Activated CD4-positive, alpha-beta memory T cell treated with anti-CD3 and anti-CD28 coated beads for 36 hours (primary cell): ENCODE measurements at regions of chr10 and their contacts with region 1.

Region 1: DNA sequence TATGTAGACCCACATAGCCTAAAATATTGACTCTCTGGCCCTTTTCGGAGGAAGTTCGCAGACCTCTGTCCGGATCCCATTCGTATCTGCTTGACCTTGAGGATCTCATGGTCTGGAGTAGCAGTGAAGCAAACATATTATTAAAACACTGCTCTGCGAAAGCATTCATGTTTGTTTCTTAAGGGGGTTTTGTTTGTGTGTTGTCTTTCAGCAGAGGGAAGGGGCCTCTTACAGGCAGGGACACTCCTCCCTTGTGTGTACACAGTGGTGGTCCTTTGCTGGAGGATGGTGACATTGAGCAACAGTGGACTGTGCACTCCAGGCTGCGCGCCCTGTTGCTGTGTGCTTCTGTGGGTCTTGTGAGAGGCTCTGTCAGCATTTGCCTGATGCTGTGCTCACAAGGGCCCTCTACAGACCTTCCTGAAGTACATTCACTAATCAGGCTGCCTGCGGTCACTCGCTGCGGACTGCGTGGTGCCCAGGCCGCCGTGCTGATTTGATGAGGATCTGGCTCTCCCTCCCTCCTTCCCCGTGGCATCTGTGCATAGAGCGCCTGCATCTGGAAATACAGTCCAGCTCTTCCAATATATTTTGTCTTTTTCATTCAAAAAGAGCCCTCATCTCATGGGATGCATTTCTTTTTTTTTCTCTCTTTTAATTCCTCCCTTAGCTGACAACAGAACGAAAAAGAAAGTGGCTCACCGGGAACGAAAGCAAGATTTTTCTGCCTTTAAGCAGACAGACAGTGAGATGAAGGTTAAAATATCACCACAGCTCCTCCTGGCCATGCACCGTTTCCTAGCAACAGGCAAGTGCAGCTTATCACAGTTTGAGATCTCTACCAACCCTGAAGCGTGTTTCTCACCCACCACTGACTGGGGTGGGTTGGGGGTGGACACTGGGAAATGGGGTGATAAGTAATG is 135.8 kb downstream of the CNNM2 start:
- DNase-seq: peak; percentile 66
- H3K4me3 Mint-ChIP-seq: peak overlapping the region; percentile 75
- H3K27ac Mint-ChIP-seq: peak overlapping the region; percentile 84
- H3K4me1 Mint-ChIP-seq: peaks cover 17% of the 10 kb centered on the region
- H3K27me3 Mint-ChIP-seq: no peaks in the 10 kb centered on the region

Region 2: GRCh38 chr10:102935505-102935904 is 118.4 kb before region 1 on chr10:
- CTCF ChIA-PET with region 1: no interaction called
- POLR2A ChIA-PET with region 1: no interaction called
- intact Hi-C with region 1: loop called (anchors 1 kb)
- DNase-seq: peak; percentile 14
- H3K4me3 Mint-ChIP-seq: no peak overlapping the region
- H3K27ac Mint-ChIP-seq: peak overlapping the region; percentile 88
- H3K4me1 Mint-ChIP-seq: peaks cover 19% of the 10 kb centered on the region
- H3K27me3 Mint-ChIP-seq: no peaks in the 10 kb centered on the region

Region 3: DNA sequence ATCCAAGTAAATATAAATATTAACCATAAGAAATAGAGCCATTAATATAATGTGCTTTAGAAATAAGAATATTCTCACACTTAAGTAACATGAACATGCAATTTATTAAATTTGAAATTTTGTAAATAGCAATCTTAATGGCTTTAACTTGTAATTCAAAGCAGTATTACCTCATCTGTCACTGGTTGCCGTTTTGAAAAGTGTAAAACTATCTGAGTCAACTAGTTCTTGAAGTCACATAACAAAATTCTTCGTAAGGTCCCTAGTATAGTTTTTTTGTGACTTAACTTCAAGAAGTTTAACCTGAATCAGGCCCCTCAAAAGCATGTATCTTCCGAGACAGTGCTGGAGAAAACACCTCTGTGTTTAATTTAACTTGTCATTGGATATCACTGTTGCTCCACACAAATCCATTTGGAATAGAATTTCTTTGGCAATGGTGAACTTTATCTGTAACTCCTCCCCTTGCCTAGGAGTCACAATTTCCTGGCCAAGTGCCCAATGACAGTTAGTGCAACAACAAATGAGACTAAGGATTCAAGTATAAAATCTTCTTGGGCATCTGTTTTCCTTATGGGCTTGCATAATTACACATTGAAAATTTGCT is 92.0 kb after region 1 on chr10:
- CTCF ChIA-PET with region 1: no interaction called
- POLR2A ChIA-PET with region 1: no interaction called
- intact Hi-C with region 1: no loop called
- DNase-seq: peak; percentile 36
- H3K4me3 Mint-ChIP-seq: no peak overlapping the region
- H3K27ac Mint-ChIP-seq: no peak overlapping the region
- H3K4me1 Mint-ChIP-seq: peaks cover 2% of the 10 kb centered on the region
- H3K27me3 Mint-ChIP-seq: no peaks in the 10 kb centered on the region